ENCODE measurements at regions of chr5 and their contacts with region 1.

Region 1: GRCh38 chr5:156739881-156740280 is 110.2 kb upstream of the PPP1R2B start:
- DNase-seq: no peak
- ATAC-seq: no peak
- H3K4me3 ChIP-seq: no peak overlapping the region
- H3K27ac ChIP-seq: no peak overlapping the region
- H3K4me1 ChIP-seq: no peaks in the 10 kb centered on the region
- H3K27me3 ChIP-seq: no peaks in the 10 kb centered on the region
- CTCF ChIP-seq: no peak
- EP300 ChIP-seq: no peak
- POLR2A ChIP-seq: no peak
- RAD21 ChIP-seq: no peak

Region 2: GRCh38 chr5:156219483-156220005 is 520.3 kb before region 1 on chr5:
- CTCF ChIA-PET with region 1: no interaction called
- POLR2A ChIA-PET with region 1: no interaction called
- RAD21 ChIA-PET with region 1: no interaction called
- SMC1A ChIA-PET with region 1: no interaction called
- in situ Hi-C with region 1: no loop called
- intact Hi-C with region 1: no loop called
- DNase-seq: no peak
- ATAC-seq: no peak
- H3K4me3 ChIP-seq: no peak overlapping the region
- H3K27ac ChIP-seq: no peak overlapping the region
- H3K4me1 ChIP-seq: no peaks in the 10 kb centered on the region
- H3K27me3 ChIP-seq: no peaks in the 10 kb centered on the region
- CTCF ChIP-seq: no peak
- EP300 ChIP-seq: no peak
- POLR2A ChIP-seq: no peak
- RAD21 ChIP-seq: no peak

Region 3: DNA sequence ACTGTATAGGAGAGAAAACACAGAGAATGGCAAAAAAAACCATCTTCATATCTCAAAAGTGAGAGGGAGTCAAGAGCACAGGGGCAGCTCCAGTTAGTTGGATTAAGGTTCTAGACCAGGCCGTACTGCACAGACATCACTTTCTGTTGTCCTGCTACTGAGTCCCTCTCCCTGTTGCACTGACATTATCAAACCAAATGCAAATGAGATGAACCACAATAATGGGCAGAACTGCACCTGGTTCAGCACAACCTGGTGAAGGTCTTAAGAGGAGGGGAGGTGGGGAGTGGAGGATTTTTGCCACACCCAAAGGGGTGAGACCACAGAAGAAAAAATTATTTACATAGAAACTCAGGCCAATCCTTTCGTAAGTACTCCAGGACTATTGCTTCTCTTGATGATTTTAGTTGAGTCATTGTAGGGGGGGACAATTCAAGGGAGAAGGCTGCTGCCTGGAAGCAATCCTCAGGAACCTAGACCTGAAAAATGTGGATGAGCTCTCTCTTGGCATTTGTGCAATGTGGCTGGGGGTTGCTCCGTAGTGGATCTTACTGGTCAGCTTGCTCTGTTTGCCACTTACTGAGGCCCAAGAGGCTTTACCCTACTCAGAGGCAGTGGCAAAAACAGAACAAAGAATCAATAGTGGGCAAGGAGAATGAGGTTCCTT is 15.7 kb after region 1 on chr5:
- CTCF ChIA-PET with region 1: interaction called, 3 read pairs
- POLR2A ChIA-PET with region 1: no interaction called
- RAD21 ChIA-PET with region 1: no interaction called
- SMC1A ChIA-PET with region 1: interaction called, 10 read pairs
- in situ Hi-C with region 1: no loop called
- intact Hi-C with region 1: no loop called
- DNase-seq: no peak
- ATAC-seq: no peak
- H3K4me3 ChIP-seq: no peak overlapping the region
- H3K27ac ChIP-seq: no peak overlapping the region
- H3K4me1 ChIP-seq: no peaks in the 10 kb centered on the region
- H3K27me3 ChIP-seq: no peaks in the 10 kb centered on the region
- CTCF ChIP-seq: no peak
- EP300 ChIP-seq: no peak
- POLR2A ChIP-seq: no peak
- RAD21 ChIP-seq: no peak